Activated CD4-positive, alpha-beta memory T cell treated with anti-CD3 and anti-CD28 coated beads, Interleukin-2, amount 10 ng/mL, durations not matched to agents 7 days and 5 days (primary cell): ENCODE measurements at regions of chr4 and their contacts with region 1.

Region 1: DNA sequence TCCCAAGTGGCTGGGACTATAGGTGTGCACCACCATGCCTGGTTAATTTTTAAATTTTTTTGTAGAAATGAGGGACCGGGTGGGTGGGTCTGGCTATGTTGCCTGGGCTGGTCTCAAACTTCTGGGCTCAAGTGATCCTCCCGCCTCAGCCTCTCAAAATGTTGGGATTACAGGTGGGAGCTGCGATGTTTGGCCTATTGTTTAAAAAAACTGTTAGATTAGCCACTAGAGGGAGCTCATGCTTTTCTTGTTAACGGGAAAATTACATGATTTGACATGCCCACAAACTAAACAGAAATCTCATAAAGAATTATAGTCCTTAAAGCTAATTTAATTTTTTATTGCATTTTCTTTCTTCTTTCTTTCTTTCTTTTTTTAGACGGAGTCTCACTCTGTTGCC is 5.0 kb upstream of the SDAD1 start:
- DNase-seq: no peak
- H3K4me3 Mint-ChIP-seq: no peak overlapping the region
- H3K27ac Mint-ChIP-seq: no peak overlapping the region
- H3K4me1 Mint-ChIP-seq: peaks cover 12% of the 10 kb centered on the region
- H3K27me3 Mint-ChIP-seq: no peaks in the 10 kb centered on the region

Region 2: DNA sequence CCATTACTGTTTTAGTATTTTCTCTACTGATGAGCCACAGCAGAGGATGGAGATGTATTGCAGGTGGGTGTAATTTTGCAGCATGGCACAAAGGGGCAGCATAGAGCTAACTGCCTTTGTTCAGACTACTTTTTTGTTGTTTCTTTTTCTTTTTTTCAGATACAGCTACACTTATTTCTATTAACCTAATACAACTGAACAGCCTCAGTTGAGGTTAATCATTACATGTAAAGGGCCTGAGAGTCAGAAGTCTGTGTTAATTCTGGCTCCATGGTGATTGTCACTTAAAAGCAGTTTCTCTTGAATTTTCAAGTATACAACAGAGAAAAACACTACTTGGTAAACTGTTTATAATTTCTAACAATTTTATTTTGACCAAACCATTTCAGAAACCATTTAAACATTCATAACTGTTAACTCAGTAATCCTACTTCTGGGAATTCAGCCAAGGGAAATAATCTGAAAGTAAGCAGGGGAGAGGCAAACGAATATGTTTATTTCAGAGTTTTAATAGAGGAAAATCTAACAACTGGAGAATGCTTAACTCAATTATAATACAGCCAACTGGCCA is 79.6 kb before region 1 on chr4:
- CTCF ChIA-PET with region 1: interaction called, 12 read pairs
- POLR2A ChIA-PET with region 1: no interaction called
- DNase-seq: peak; percentile 37
- H3K4me3 Mint-ChIP-seq: no peak overlapping the region
- H3K27ac Mint-ChIP-seq: no peak overlapping the region
- H3K4me1 Mint-ChIP-seq: no peaks in the 10 kb centered on the region
- H3K27me3 Mint-ChIP-seq: no peaks in the 10 kb centered on the region

Region 3: GRCh38 chr4:76055016-76055415 is 59.3 kb after region 1 on chr4:
- CTCF ChIA-PET with region 1: interaction called, 21 read pairs
- POLR2A ChIA-PET with region 1: interaction called, 4 read pairs
- DNase-seq: no peak
- H3K4me3 Mint-ChIP-seq: no peak overlapping the region
- H3K27ac Mint-ChIP-seq: no peak overlapping the region
- H3K4me1 Mint-ChIP-seq: peaks cover 48% of the 10 kb centered on the region
- H3K27me3 Mint-ChIP-seq: no peaks in the 10 kb centered on the region

Region 4: GRCh38 chr4:76067652-76068286 is 72.0 kb after region 1 on chr4:
- CTCF ChIA-PET with region 1: interaction called, 34 read pairs
- POLR2A ChIA-PET with region 1: no interaction called
- DNase-seq: peak; percentile 77
- H3K4me3 Mint-ChIP-seq: no peak overlapping the region
- H3K27ac Mint-ChIP-seq: no peak overlapping the region
- H3K4me1 Mint-ChIP-seq: no peaks in the 10 kb centered on the region
- H3K27me3 Mint-ChIP-seq: no peaks in the 10 kb centered on the region

Region 5: GRCh38 chr4:76377911-76378310 is 382.2 kb after region 1 on chr4:
- CTCF ChIA-PET with region 1: interaction called, 14 read pairs
- POLR2A ChIA-PET with region 1: no interaction called
- DNase-seq: peak; percentile 64
- H3K4me3 Mint-ChIP-seq: no peak overlapping the region
- H3K27ac Mint-ChIP-seq: no peak overlapping the region
- H3K4me1 Mint-ChIP-seq: no peaks in the 10 kb centered on the region
- H3K27me3 Mint-ChIP-seq: peaks cover 3% of the 10 kb centered on the region